GM13976 (cell line): ENCODE measurements at regions of chr7 and their contacts with region 1.

Region 1: GRCh38 chr7:24665564-24666294 is 91.5 kb downstream of the GSDME start:
- DNase-seq: peak; percentile 38
- CTCF ChIP-seq: peak; percentile 55

Region 2: DNA sequence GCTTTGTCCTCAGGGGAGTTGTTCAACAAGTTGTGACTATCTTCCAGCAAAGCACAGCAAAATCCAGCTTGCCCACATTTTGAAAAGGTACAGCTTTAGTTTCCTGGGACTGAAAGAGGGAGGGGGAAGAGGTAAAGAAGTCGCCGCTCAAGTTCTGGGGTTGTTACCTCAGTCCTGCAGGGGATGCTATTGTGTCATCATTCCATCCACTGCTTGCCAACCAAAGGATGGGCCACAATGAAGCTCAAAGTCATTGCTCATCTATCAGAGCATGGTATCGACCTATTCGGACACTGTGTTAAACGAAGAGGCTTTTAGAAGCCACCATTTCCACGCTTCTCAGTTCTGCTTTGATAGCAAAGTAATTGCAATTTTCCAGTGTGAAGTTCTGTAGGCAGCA is 347.4 kb before region 1 on chr7:
- in situ Hi-C with region 1: loop called (anchors 25 kb)
- DNase-seq: peak; percentile 48
- CTCF ChIP-seq: peak; percentile 29

Region 3: GRCh38 chr7:24401628-24402593 is 263.8 kb before region 1 on chr7:
- in situ Hi-C with region 1: loop called (anchors 25 kb)
- DNase-seq: peak; percentile 36
- CTCF ChIP-seq: peak; percentile 19